MCF 10A (cell line): ENCODE measurements at regions of chr7 and their contacts with region 1.

Region 1: GRCh38 chr7:93245525-93246432 is 13.6 kb downstream of the VPS50 start:
- DNase-seq: peak; percentile 34
- H3K4me3 Mint-ChIP-seq: no peak overlapping the region
- H3K27ac Mint-ChIP-seq: no peak overlapping the region
- H3K4me1 Mint-ChIP-seq: no peaks in the 10 kb centered on the region
- H3K27me3 Mint-ChIP-seq: no peaks in the 10 kb centered on the region
- CTCF ChIP-seq: peak; percentile 40

Region 2: DNA sequence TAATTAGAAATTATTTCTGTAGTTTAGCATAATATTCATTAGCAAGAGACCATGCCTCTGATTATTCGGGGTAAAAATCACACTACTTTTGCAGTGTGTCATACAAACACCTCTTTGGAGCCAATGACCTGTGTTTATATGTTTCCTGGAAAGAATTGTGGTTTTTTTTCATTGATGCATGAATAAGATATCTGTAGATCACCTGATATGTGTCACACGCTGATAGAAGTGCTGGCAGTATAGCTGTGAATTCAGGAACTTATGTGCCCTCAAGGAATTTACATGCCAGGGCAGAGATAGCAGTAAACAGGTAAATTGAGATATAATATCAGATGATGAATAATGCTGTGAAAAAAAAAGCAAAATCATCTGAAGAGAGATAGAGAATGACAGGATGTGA is 104.6 kb after region 1 on chr7:
- CTCF ChIA-PET with region 1: no interaction called
- POLR2A ChIA-PET with region 1: no interaction called
- intact Hi-C with region 1: no loop called
- DNase-seq: no peak
- H3K4me3 Mint-ChIP-seq: no peak overlapping the region
- H3K27ac Mint-ChIP-seq: no peak overlapping the region
- H3K4me1 Mint-ChIP-seq: no peaks in the 10 kb centered on the region
- H3K27me3 Mint-ChIP-seq: no peaks in the 10 kb centered on the region
- CTCF ChIP-seq: no peak

Region 3: GRCh38 chr7:93374345-93374940 is 128.7 kb after region 1 on chr7:
- CTCF ChIA-PET with region 1: interaction called, 5 read pairs
- POLR2A ChIA-PET with region 1: no interaction called
- intact Hi-C with region 1: loop called (anchors 2 kb)
- DNase-seq: peak; percentile 47
- H3K4me3 Mint-ChIP-seq: no peak overlapping the region
- H3K27ac Mint-ChIP-seq: no peak overlapping the region
- H3K4me1 Mint-ChIP-seq: no peaks in the 10 kb centered on the region
- H3K27me3 Mint-ChIP-seq: peaks cover 58% of the 10 kb centered on the region
- CTCF ChIP-seq: peak; percentile 52